HCT116 (cell line): ENCODE measurements at regions of chr12 and their contacts with region 1.

Region 1: DNA sequence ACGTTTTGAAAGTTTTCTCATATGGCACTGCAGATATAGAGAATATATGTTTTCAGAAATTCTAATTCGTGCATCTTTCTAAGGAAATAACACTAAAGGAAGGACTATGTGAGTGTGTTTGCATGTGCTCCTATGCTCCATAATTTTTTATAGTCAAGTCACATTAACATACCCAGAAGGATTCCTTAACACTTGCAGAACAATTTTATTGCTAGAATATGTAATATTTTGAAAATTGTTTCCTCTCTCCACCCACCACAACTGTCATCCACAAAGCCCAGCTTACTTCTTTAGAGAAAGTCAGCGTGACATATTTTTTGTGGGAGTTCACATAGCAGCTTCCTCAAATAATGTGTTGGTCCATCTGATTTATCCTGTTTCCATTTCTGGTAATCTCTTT is 604.6 kb upstream of the MGAT4C start:
- DNase-seq: no peak
- ATAC-seq: no peak
- H3K4me3 ChIP-seq: no peak overlapping the region
- H3K27ac ChIP-seq: no peak overlapping the region
- H3K4me1 ChIP-seq: no peaks in the 10 kb centered on the region
- H3K27me3 ChIP-seq: no peaks in the 10 kb centered on the region
- CTCF ChIP-seq: no peak
- POLR2A ChIP-seq: no peak
- RAD21 ChIP-seq: no peak

Region 2: GRCh38 chr12:86838711-86839110 is 22.1 kb before region 1 on chr12:
- CTCF ChIA-PET with region 1: no interaction called
- POLR2A ChIA-PET with region 1: no interaction called
- RAD21 ChIA-PET with region 1: no interaction called
- intact Hi-C with region 1: loop called (anchors 2 kb)
- DNase-seq: no peak
- ATAC-seq: no peak
- H3K4me3 ChIP-seq: no peak overlapping the region
- H3K27ac ChIP-seq: no peak overlapping the region
- H3K4me1 ChIP-seq: no peaks in the 10 kb centered on the region
- H3K27me3 ChIP-seq: no peaks in the 10 kb centered on the region
- CTCF ChIP-seq: no peak
- POLR2A ChIP-seq: no peak
- RAD21 ChIP-seq: no peak

Region 3: DNA sequence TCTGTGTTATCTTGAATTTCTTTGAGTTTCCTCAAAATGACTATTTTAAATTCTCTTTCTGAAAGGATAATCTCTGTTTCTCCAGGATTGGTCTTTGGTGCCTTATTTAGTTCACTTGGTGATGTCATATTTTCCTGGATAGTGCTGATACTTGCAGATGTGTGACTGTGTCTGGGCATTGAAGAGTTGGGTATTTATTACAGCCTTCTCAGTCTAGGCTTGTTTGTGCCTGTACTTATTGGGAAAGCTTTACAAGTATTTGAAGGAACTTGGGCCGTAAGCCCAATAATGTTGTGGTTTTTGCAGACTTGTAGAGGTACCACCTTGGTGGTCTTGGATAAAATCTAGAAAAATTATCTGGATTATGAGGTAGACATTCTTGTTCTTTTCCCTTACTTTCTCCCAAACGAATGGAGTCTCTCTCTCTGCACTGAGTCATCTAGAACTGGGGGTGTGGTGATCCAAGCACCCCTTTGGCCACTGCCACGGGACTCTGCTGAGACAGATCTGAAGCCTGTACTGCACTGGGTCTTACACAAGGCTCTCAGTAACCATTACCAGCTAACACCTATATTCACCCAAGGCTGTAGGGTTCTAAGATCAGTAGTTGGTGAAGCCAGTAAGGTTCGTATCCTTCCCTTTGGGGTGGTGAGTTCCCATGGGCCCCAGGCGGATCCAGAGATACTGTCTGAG is 99.1 kb after region 1 on chr12:
- CTCF ChIA-PET with region 1: no interaction called
- POLR2A ChIA-PET with region 1: no interaction called
- RAD21 ChIA-PET with region 1: no interaction called
- intact Hi-C with region 1: no loop called
- DNase-seq: no peak
- ATAC-seq: no peak
- H3K4me3 ChIP-seq: no peak overlapping the region
- H3K27ac ChIP-seq: no peak overlapping the region
- H3K4me1 ChIP-seq: no peaks in the 10 kb centered on the region
- H3K27me3 ChIP-seq: no peaks in the 10 kb centered on the region
- CTCF ChIP-seq: no peak
- POLR2A ChIP-seq: no peak
- RAD21 ChIP-seq: no peak